GM13976 (cell line): ENCODE measurements at regions of chr15 and their contacts with region 1.

Region 1: GRCh38 chr15:31326156-31326732 is 391 bp upstream of the KLF13 start:
- DNase-seq: peak; percentile 98
- CTCF ChIP-seq: no peak

Region 2: GRCh38 chr15:31236184-31237042 is 89.8 kb before region 1 on chr15:
- in situ Hi-C with region 1: loop called (anchors 10 kb)
- DNase-seq: peak; percentile 59
- CTCF ChIP-seq: no peak

Region 3: DNA sequence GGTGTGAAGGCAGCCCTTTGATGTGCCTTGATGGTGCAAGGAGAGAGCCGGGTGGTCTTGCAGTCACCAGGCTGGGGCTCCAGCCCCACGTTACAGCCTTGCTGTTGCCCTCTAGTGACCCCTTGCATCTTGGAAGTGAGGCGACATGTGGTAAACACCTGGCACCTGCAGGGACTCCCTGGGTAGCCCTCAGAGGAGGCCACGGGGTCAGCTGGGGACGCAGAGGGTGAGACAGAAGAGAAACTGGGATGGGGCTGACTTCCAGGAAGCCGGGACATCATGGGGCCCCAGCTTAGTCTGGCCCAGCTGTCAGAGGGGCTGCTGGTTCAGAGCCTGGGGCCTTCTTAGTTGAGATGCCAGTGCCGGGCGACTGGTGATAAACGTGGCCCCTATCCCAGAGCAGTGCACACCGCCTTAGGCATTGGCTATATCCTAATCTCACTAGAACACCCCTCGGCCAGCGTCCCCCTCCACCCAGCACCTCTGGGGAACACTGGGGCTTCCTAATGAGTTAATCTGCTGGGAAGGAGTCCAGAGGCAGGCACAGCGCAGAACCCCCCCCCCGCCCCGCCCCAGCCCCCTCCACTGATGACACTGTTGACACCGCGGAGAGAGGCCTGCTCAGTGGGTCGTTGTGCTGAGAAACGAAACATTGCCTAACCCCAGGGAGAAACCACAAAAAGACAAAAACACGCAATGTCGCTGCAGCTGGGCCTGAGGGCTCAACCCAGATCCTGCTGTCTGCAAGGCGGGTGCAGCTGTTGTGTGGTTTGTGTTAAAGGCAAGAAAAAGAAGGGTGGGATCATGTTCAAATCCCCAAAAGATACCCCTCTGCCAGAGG is 60.2 kb before region 1 on chr15:
- in situ Hi-C with region 1: loop called (anchors 10 kb)
- DNase-seq: peak; percentile 87
- CTCF ChIP-seq: no peak

Region 4: DNA sequence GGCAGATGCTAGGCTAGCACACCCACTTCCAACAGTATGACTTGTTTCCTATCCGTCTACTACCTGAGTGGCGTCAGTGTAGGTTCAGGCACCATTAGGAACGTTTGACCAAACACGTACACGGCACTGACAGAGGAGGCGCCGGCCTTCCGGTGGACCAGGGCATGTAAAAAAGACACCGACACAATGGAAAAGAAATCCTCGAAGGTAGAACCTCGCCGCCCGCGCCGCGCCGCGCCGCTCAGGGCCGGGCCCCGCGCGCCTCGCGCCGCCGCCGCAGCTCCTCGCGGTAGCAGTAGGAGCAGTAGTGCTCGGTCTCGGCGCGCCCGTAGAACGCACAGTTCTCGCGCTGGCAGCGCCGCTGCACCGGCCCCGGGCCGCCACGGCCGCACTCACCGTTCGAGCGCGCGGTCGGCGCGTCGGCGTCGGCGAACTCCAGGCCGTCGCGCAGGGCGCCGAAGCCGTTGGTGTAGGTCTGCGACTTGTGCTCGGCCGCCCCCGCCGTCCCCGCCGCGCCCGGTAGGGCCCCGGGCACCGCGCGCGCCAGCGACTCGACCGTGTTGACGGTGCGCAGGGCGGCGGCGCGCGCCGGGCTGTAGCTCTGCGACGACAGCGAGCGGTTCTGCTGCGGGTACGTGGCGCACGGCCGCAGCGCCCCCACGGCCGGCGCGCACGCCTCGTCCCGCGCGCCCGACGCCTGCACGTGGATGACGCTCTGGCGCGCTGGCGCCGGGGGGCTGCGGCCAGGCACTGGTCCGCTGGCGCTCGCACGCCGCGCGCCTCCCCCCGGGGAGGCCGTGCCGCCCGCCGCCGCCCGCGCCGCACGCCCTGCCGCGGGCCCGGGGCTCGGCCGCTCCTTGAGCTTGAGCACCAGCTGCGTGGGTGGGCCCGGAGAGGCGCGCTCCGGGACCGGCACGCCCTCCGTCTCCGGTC is 157.1 kb after region 1 on chr15:
- in situ Hi-C with region 1: no loop called
- DNase-seq: peak; percentile 81
- CTCF ChIP-seq: no peak

Region 5: DNA sequence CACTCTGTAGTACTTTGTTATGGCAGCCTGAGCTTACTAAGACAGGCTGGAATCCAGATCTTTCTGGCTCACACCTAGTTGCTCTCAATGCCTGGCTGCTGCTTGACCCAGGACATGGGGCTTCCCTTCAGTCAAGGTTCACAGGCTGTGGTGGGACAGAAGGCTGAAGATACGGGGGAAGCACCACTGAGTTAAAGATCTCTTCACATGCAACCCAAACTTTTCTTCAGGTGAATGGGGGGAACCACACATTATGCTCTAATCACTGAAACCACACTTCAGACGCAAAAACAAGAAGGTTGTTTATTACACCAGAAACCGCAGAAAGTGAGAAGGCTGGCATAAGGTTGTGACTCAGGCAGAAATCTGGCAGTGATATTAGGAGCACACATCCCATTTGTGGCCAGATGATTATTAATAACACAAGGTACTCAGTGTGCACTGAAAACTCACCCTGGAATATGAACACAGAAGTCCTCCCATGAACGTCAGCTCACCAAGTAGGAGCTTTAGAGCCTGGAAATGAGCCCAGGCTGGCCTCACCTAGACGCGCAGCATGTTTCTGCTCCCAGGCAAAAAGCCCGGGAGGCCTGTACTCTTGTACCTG is 473.6 kb after region 1 on chr15:
- in situ Hi-C with region 1: no loop called
- DNase-seq: peak; percentile 41
- CTCF ChIP-seq: no peak